ENCODE measurements at regions of chr6 and their contacts with region 1.

Region 1: GRCh38 chr6:593139-593906 is 63.6 kb downstream of the HUS1B start:
- DNase-seq: peak; percentile 44 to 68
- H3K4me3 ChIP-seq: no peak overlapping the region
- H3K27ac ChIP-seq: no peak overlapping the region
- H3K4me1 ChIP-seq: no peaks in the 10 kb centered on the region
- H3K27me3 ChIP-seq: no peaks in the 10 kb centered on the region
- CTCF ChIP-seq: peak in 5 of 6 experiments; percentile 48 to 76 (median 73)
- POLR2A ChIP-seq: no peak

Region 2: GRCh38 chr6:722077-722524 is 128.8 kb after region 1 on chr6:
- intact Hi-C with region 1: loop called (anchors 10 kb)
- DNase-seq: peak; percentile 64 to 75
- H3K4me3 ChIP-seq: no peak overlapping the region
- H3K27ac ChIP-seq: no peak overlapping the region
- H3K4me1 ChIP-seq: peaks cover 0 to 4% of the 10 kb centered on the region in 2 donors
- H3K27me3 ChIP-seq: no peaks in the 10 kb centered on the region
- CTCF ChIP-seq: peak; percentile 61 to 86 (median 66)
- POLR2A ChIP-seq: no peak

Region 3: GRCh38 chr6:786946-787763 is 193.8 kb after region 1 on chr6:
- intact Hi-C with region 1: loop called (anchors 10 kb)
- DNase-seq: no peak
- H3K4me3 ChIP-seq: no peak overlapping the region
- H3K27ac ChIP-seq: no peak overlapping the region
- H3K4me1 ChIP-seq: no peaks in the 10 kb centered on the region
- H3K27me3 ChIP-seq: peaks cover 5% of the 10 kb centered on the region
- CTCF ChIP-seq: peak in 4 of 6 experiments; percentile 21 to 51 (median 35)
- POLR2A ChIP-seq: no peak

Region 4: GRCh38 chr6:1381481-1382330 is 788.4 kb after region 1 on chr6:
- intact Hi-C with region 1: loop called (anchors 5 kb)
- DNase-seq: peak; percentile 49 to 54
- H3K4me3 ChIP-seq: peak overlapping the region in 1 of 3 donors; percentile 11
- H3K27ac ChIP-seq: no peak overlapping the region
- H3K4me1 ChIP-seq: peaks cover 15 to 46% of the 10 kb centered on the region in 2 donors
- H3K27me3 ChIP-seq: peaks cover 76% of the 10 kb centered on the region
- CTCF ChIP-seq: peak; percentile 41 to 96 (median 88)
- POLR2A ChIP-seq: no peak